Caco-2 (cell line): ENCODE measurements at regions of chr16 and their contacts with region 1.

Region 1: GRCh38 chr16:8567750-8568617 is 22.3 kb downstream of the TMEM114 start:
- DNase-seq: peak; percentile 85
- H3K4me3 ChIP-seq: no peak overlapping the region
- H3K4me3 Mint-ChIP-seq: no peak overlapping the region
- H3K27ac Mint-ChIP-seq: peak overlapping the region; percentile 24
- H3K4me1 ChIP-seq: peaks cover 6% of the 10 kb centered on the region; the same call in 1 of the 2 replicates
- H3K4me1 Mint-ChIP-seq: no peaks in the 10 kb centered on the region
- H3K27me3 ChIP-seq: no peaks in the 10 kb centered on the region
- H3K27me3 Mint-ChIP-seq: no peaks in the 10 kb centered on the region
- CTCF ChIP-seq: peak; percentile 83 to 97

Region 2: GRCh38 chr16:8522757-8523156 is 45.2 kb before region 1 on chr16:
- CTCF ChIA-PET with region 1: no interaction called
- POLR2A ChIA-PET with region 1: no interaction called
- intact Hi-C with region 1: no loop called
- DNase-seq: no peak
- H3K4me3 ChIP-seq: no peak overlapping the region
- H3K4me3 Mint-ChIP-seq: no peak overlapping the region
- H3K27ac Mint-ChIP-seq: no peak overlapping the region
- H3K4me1 ChIP-seq: no peaks in the 10 kb centered on the region
- H3K4me1 Mint-ChIP-seq: no peaks in the 10 kb centered on the region
- H3K27me3 ChIP-seq: no peaks in the 10 kb centered on the region
- H3K27me3 Mint-ChIP-seq: peaks cover 3% of the 10 kb centered on the region
- CTCF ChIP-seq: no peak

Region 3: GRCh38 chr16:8655184-8655717 is 87.3 kb after region 1 on chr16:
- CTCF ChIA-PET with region 1: interaction called, 5 read pairs
- POLR2A ChIA-PET with region 1: no interaction called
- intact Hi-C with region 1: loop called (anchors 1 kb)
- DNase-seq: peak; percentile 59 to 68
- H3K4me3 ChIP-seq: no peak overlapping the region
- H3K4me3 Mint-ChIP-seq: no peak overlapping the region
- H3K27ac Mint-ChIP-seq: no peak overlapping the region
- H3K4me1 ChIP-seq: no peaks in the 10 kb centered on the region
- H3K4me1 Mint-ChIP-seq: no peaks in the 10 kb centered on the region
- H3K27me3 ChIP-seq: no peaks in the 10 kb centered on the region
- H3K27me3 Mint-ChIP-seq: no peaks in the 10 kb centered on the region
- CTCF ChIP-seq: peak; percentile 56 to 85